ENCODE measurements at regions of chr11 and their contacts with region 1.

Region 1: GRCh38 chr11:83249972-83250593 is 36.1 kb downstream of the CCDC90B start:
- DNase-seq: no peak
- H3K4me3 ChIP-seq: no peak overlapping the region
- H3K27ac ChIP-seq: no peak overlapping the region
- H3K4me1 ChIP-seq: no peaks in the 10 kb centered on the region
- H3K27me3 ChIP-seq: no peaks in the 10 kb centered on the region
- CTCF ChIP-seq: peak in 2 of 3 experiments; percentile 22 to 29
- POLR2A ChIP-seq: no peak

Region 2: DNA sequence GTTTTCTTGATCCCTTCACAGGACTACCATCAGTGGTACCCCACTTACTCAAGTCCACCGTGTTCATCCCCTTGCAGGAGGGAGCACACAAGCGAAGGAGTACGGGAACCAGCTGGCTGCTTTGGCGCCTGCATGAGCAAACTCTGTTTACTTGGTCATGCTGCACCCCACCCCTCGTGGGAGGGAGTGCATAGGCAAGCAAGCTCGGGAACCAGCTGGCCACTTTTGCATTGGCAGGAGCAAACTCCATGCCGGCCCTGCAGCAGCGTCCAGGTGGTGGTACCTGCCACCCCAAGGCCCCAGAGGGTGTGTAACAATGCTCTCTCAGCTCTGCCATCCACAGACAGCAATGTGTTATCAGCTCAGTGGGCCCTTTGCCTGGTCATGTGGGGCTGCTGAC is 1254.2 kb before region 1 on chr11:
- intact Hi-C with region 1: no loop called
- DNase-seq: no peak
- H3K4me3 ChIP-seq: no peak overlapping the region
- H3K27ac ChIP-seq: no peak overlapping the region
- H3K4me1 ChIP-seq: no peaks in the 10 kb centered on the region
- H3K27me3 ChIP-seq: no peaks in the 10 kb centered on the region
- CTCF ChIP-seq: no peak
- POLR2A ChIP-seq: no peak

Region 3: GRCh38 chr11:82906244-82906654 is 343.8 kb before region 1 on chr11:
- intact Hi-C with region 1: loop called (anchors 10 kb)
- DNase-seq: no peak
- H3K4me3 ChIP-seq: no peak overlapping the region
- H3K27ac ChIP-seq: no peak overlapping the region
- H3K4me1 ChIP-seq: no peaks in the 10 kb centered on the region
- H3K27me3 ChIP-seq: no peaks in the 10 kb centered on the region
- CTCF ChIP-seq: peak; percentile 27 to 53 (median 46)
- POLR2A ChIP-seq: no peak

Measured in vagina (tissue), 2 donors.